ENCODE measurements at regions of chr12 and their contacts with region 1.

Region 1: GRCh38 chr12:21451529-21451928 is 14.1 kb downstream of the PYROXD1 start:
- DNase-seq: peak; percentile 8
- H3K4me3 ChIP-seq: no peak overlapping the region
- H3K27ac ChIP-seq: no peak overlapping the region
- H3K4me1 ChIP-seq: no peaks in the 10 kb centered on the region
- H3K27me3 ChIP-seq: no peaks in the 10 kb centered on the region
- CTCF ChIP-seq: no peak
- POLR2A ChIP-seq: no peak

Region 2: GRCh38 chr12:21248679-21249078 is 202.8 kb before region 1 on chr12:
- CTCF ChIA-PET with region 1: interaction called, 25 read pairs
- POLR2A ChIA-PET with region 1: no interaction called
- dilution Hi-C with region 1: no loop called
- intact Hi-C with region 1: loop called (anchors 5 kb)
- DNase-seq: peak; percentile 22
- H3K4me3 ChIP-seq: no peak overlapping the region
- H3K27ac ChIP-seq: no peak overlapping the region
- H3K4me1 ChIP-seq: no peaks in the 10 kb centered on the region
- H3K27me3 ChIP-seq: no peaks in the 10 kb centered on the region
- CTCF ChIP-seq: no peak
- POLR2A ChIP-seq: no peak

Region 3: DNA sequence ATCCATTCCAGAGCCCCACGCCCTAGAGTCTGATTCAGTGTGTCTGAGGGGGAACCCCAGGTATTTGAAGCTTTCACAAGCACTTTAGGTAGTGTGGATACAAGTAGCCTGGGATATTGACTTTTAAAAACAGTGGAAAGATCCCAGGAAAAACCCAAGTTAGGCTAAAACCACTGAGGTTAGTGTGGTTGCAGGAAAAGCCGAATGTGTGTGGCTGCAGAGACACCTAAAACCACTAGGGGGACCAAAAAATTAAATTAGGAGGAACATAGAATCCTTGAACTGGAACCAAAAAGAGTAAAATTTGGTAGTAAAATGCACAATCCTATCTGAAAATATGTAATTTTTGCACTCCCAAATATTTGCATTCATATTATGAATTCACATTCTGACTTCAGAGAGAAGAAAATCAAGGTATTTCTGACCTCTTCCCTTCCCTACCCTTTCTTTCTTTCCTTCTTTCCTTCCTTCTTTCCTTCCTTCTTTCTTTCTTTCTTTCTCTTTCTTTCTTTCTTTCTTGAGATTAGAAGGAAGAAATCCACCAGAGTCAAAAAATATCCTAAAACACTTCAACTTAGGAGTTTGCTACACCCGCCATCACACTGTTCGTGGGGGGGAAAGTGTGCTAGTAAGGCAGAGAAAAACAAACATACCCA is 154.7 kb before region 1 on chr12:
- CTCF ChIA-PET with region 1: interaction called, 23 read pairs
- POLR2A ChIA-PET with region 1: no interaction called
- dilution Hi-C with region 1: no loop called
- intact Hi-C with region 1: loop called (anchors 5 kb)
- DNase-seq: peak; percentile 13
- H3K4me3 ChIP-seq: no peak overlapping the region
- H3K27ac ChIP-seq: no peak overlapping the region
- H3K4me1 ChIP-seq: no peaks in the 10 kb centered on the region
- H3K27me3 ChIP-seq: no peaks in the 10 kb centered on the region
- CTCF ChIP-seq: peak; percentile 62 to 65
- POLR2A ChIP-seq: no peak

Region 4: GRCh38 chr12:21308785-21309184 is 142.7 kb before region 1 on chr12:
- CTCF ChIA-PET with region 1: interaction called, 23 read pairs
- POLR2A ChIA-PET with region 1: no interaction called
- dilution Hi-C with region 1: no loop called
- intact Hi-C with region 1: loop called (anchors 1 kb)
- DNase-seq: peak; percentile 4
- H3K4me3 ChIP-seq: no peak overlapping the region
- H3K27ac ChIP-seq: no peak overlapping the region
- H3K4me1 ChIP-seq: no peaks in the 10 kb centered on the region
- H3K27me3 ChIP-seq: peaks cover 1 to 3% of the 10 kb centered on the region in 2 experiments
- CTCF ChIP-seq: no peak
- POLR2A ChIP-seq: no peak

Region 5: GRCh38 chr12:21472197-21472823 is 20.8 kb after region 1 on chr12:
- CTCF ChIA-PET with region 1: no interaction called
- POLR2A ChIA-PET with region 1: no interaction called
- dilution Hi-C with region 1: no loop called
- intact Hi-C with region 1: loop called (anchors 1 kb)
- DNase-seq: no peak
- H3K4me3 ChIP-seq: no peak overlapping the region
- H3K27ac ChIP-seq: no peak overlapping the region
- H3K4me1 ChIP-seq: peaks cover 6% of the 10 kb centered on the region
- H3K27me3 ChIP-seq: no peaks in the 10 kb centered on the region
- CTCF ChIP-seq: no peak
- POLR2A ChIP-seq: no peak

Region 6: DNA sequence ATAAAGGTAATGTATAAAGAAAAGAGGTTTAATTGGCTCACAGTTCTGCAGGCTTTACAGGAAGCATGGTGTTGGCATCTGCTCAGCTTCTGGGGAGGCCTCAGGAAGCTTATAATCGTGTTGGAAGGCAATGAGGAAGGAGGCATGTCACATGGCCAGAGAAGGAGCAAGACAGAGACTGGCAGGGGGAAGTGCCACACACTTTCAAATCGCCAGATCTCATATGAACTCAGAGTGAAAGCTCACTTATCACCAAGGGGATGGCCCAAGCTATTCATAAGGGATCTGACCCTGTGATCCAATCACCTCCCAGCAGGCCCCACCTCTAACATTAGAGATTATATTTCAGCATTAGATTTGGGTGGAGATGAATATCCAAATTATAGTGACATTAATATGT is 179.8 kb after region 1 on chr12:
- CTCF ChIA-PET with region 1: no interaction called
- POLR2A ChIA-PET with region 1: no interaction called
- dilution Hi-C with region 1: no loop called
- intact Hi-C with region 1: loop called (anchors 5 kb)
- DNase-seq: no peak
- H3K4me3 ChIP-seq: no peak overlapping the region
- H3K27ac ChIP-seq: no peak overlapping the region
- H3K4me1 ChIP-seq: no peaks in the 10 kb centered on the region
- H3K27me3 ChIP-seq: no peaks in the 10 kb centered on the region
- CTCF ChIP-seq: no peak
- POLR2A ChIP-seq: no peak

Measured in endothelial cell of umbilical vein (primary cell).